ENCODE measurements at regions of chr5 and their contacts with region 1.

Region 1: DNA sequence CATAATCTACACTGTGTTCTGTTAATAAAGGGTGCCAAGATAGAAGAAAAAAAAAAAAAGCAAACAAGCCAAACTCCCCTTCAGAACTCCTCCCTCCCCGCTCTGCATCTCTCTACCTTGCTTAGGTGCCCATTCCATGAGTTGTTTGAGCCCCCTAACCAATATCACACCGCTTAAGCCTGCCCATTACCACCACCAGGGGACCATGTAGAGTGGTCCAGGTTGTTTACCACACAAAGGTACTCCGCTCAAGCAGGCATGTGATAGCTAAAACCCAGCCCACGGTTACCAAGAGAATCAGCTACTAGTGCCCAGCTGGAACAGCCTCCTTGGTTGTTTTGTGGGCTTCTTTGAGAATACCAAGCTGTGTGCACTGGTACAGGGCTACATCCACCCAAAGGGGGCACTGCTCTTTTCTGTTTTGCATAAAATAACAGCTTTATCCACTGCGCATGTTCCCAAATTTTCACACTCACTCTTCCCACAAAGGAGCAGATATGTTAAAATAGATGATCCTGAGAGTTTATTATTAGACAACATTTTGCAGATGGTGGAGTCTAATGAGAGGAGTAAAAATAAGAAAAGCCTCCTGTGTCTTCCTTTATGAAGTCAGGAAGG is 304.1 kb downstream of the DEPDC1B start:
- DNase-seq: no peak
- ATAC-seq: no peak; the same call in 2 of the 3 replicates
- H3K4me3 ChIP-seq: no peak overlapping the region
- H3K27ac ChIP-seq: no peak overlapping the region
- H3K4me1 ChIP-seq: no peaks in the 10 kb centered on the region
- H3K27me3 ChIP-seq: no peaks in the 10 kb centered on the region
- CTCF ChIP-seq: 0 out of 6 replicates have a peak, but pooled peaks of 1 of the 3 experiments have one; percentile 7
- EP300 ChIP-seq: no peak
- POLR2A ChIP-seq: no peak
- RAD21 ChIP-seq: no peak

Region 2: GRCh38 chr5:60365001-60365400 is 30.8 kb before region 1 on chr5:
- CTCF ChIA-PET with region 1: no interaction called
- POLR2A ChIA-PET with region 1: no interaction called
- RAD21 ChIA-PET with region 1: no interaction called
- SMC1A ChIA-PET with region 1: no interaction called
- in situ Hi-C with region 1: no loop called
- intact Hi-C with region 1: loop called (anchors 2 kb)
- DNase-seq: no peak
- ATAC-seq: no peak
- H3K4me3 ChIP-seq: no peak overlapping the region
- H3K27ac ChIP-seq: no peak overlapping the region
- H3K4me1 ChIP-seq: no peaks in the 10 kb centered on the region
- H3K27me3 ChIP-seq: no peaks in the 10 kb centered on the region
- CTCF ChIP-seq: no peak
- EP300 ChIP-seq: no peak
- POLR2A ChIP-seq: no peak
- RAD21 ChIP-seq: no peak

Measured in GM12878 (cell line).